ENCODE measurements at regions of chr1 and their contacts with region 1.

Region 1: GRCh38 chr1:145972580-145972979 is 8.1 kb downstream of the POLR3GL start:
- DNase-seq: no peak
- CTCF ChIP-seq: no peak

Region 2: DNA sequence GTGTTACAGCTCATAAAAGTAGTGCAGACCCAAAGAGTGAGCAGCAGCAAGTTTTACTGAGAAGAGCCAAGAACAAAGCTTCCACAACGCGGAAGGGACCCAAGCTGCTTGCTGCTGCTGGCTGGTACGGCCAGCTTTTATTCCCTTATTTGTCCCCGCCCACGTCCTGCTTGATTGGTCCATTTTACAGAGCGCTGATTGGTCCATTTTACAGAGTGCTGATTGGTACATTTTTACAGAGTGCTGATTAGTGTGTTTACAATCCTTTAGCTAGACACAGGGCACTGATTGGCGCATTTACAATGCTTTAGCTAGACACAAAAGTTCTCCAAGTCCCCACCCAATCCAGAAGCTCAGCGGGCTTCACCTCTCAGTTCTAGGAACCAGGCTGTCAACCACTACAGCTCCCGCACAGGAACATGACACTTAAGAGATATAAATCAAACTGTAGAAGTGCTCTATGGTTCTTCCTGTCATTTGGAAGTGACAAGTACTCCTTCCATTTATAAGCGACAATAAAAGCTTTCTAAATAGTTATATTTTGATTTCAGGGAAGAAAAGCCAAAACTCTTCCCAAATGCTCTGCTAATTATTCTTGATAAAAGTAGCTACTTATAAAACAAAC is 177.2 kb before region 1 on chr1:
- in situ Hi-C with region 1: no loop called
- DNase-seq: no peak
- CTCF ChIP-seq: no peak

Region 3: GRCh38 chr1:146019231-146020057 is 46.9 kb after region 1 on chr1:
- in situ Hi-C with region 1: loop called (anchors 5 kb)
- DNase-seq: no peak
- CTCF ChIP-seq: no peak

Region 4: GRCh38 chr1:147109041-147109440 is 1136.5 kb after region 1 on chr1:
- in situ Hi-C with region 1: no loop called
- DNase-seq: peak; percentile 45
- CTCF ChIP-seq: no peak